ENCODE measurements at regions of chr11 and their contacts with region 1.

Region 1: DNA sequence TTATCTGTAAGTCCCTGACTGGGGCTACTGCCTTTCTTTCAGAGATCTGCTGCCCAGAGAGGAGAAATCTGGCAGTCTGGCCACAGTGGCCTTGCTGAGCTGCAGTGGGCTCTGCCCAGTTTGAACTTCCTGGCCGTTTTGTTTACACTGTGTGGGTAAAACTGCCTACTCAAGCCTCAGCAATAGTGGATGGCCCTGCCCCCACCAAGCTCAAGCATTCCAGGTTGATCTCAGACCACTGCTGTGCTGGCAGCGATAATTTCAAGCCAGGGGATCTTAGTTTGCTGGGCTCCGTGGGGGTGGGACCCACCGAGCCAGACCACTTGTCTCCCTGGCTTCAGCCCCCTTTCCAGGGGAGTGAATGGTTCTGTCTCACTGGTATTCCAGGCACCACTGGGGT is 117.5 kb downstream of the TRPC6 start:
- DNase-seq: no peak
- H3K4me3 ChIP-seq: no peak overlapping the region
- H3K27ac ChIP-seq: no peak overlapping the region
- H3K4me1 ChIP-seq: no peaks in the 10 kb centered on the region
- H3K27me3 ChIP-seq: no peaks in the 10 kb centered on the region
- CTCF ChIP-seq: no peak
- EP300 ChIP-seq: no peak
- POLR2A ChIP-seq: no peak

Region 2: GRCh38 chr11:101508370-101508769 is 42.0 kb after region 1 on chr11:
- intact Hi-C with region 1: loop called in 1 of 4 experiments (anchors 2 kb)
- DNase-seq: no peak
- H3K4me3 ChIP-seq: no peak overlapping the region
- H3K27ac ChIP-seq: no peak overlapping the region
- H3K4me1 ChIP-seq: no peaks in the 10 kb centered on the region
- H3K27me3 ChIP-seq: no peaks in the 10 kb centered on the region
- CTCF ChIP-seq: no peak
- EP300 ChIP-seq: no peak
- POLR2A ChIP-seq: no peak